ENCODE measurements at regions of chr1 and their contacts with region 1.

Region 1: DNA sequence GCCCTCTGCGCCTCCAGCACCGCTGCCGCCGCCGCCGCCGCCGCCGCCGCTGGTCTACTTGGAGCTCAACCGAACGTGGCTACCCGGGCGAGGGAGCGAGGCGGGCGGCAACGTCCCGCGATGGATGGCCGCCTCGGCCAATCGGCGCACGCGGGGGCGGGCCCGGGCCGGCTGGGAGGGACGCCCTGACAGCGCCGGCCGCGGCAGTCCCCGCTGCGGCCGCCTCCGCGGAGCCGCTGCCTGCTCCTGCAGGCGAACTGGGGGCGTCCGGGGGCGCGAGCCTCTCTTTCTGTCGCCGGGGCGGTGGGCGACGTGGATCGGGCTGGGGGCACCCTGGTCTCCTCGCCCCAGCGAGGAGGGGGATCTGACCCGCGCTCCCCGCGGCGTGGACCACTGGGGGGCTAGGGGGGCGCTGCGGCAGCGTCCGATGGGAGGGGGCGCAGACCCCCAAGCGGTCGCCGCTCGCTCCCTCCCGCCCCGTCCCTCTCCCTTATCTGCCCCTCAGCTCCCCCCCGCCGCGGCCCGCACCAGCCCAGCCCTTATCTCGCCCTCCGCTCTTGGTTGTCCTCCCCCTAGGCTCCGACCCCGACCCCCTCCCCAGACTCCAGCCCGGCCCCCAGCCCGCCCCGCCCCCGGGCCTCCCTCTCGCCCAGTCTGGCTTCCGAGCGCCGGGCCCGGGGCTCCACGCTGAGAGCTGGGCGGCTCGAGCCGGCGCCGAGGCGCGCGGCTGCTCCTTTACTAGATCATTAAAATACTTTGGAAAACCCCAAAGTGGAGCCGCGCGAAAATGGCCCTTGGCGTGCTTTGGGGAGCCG is at the start of gene SSBP3:
- DNase-seq: peak; percentile 95
- ATAC-seq: peak; percentile 95
- total RNA-seq, gene SSBP3: 53.6 TPM

Region 2: DNA sequence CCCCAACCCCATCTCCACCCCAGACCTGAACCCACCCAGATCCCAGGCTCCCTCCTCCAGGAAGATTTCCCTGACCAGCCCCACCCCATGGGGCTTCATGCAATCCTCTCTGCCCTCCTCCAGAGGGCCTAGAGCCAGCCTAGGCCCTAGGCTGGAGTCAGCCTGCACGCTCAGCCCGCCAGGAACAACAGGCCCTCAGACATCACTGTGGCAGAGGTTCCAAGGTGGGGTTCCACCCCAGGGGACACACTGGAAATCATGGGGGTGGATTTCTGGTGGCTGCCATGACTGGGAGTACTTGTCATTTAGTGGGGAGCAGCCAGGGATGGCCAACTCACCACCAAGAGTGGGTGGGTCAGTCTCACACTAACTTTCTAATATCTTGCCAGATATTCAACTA is 789.6 kb before region 1 on chr1:
- intact Hi-C with region 1: no loop called
- DNase-seq: no peak
- ATAC-seq: peak; percentile 34

Region 3: DNA sequence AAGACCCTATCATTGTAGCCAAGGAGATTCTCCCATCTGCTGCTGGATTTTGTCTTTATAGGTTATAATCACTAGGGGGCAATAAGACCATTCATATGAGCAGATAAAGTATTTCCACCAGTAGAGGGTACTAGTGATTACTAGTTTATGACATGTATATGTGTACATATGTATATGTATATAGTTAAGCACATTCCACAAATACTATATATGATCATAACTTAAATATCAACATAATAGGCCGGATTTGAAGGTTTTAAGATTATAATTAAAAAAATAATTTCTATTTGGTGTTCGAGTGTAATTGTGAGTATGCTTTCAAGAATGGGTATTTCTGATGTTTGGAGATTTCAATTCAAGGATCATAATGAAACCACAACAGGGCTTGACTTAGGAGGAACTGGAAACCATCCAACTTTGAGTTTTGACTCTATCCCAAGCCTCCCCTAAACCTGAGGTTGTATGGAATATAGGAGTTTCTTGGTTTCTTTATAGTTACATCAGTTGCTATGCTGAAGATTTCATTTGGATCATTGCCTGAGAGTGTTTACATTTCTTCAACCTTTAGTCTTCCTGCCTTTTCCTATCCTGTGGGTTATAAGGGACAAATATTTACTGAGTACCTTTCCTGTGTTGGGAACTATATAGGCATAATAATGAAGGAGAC is 336.2 kb before region 1 on chr1:
- intact Hi-C with region 1: loop called (anchors 10 kb)
- DNase-seq: no peak
- ATAC-seq: peak; percentile 54

Region 4: GRCh38 chr1:54121482-54122134 is 284.9 kb before region 1 on chr1:
- intact Hi-C with region 1: loop called (anchors 5 kb)
- DNase-seq: peak; percentile 86
- ATAC-seq: peak; percentile 89

Region 5: DNA sequence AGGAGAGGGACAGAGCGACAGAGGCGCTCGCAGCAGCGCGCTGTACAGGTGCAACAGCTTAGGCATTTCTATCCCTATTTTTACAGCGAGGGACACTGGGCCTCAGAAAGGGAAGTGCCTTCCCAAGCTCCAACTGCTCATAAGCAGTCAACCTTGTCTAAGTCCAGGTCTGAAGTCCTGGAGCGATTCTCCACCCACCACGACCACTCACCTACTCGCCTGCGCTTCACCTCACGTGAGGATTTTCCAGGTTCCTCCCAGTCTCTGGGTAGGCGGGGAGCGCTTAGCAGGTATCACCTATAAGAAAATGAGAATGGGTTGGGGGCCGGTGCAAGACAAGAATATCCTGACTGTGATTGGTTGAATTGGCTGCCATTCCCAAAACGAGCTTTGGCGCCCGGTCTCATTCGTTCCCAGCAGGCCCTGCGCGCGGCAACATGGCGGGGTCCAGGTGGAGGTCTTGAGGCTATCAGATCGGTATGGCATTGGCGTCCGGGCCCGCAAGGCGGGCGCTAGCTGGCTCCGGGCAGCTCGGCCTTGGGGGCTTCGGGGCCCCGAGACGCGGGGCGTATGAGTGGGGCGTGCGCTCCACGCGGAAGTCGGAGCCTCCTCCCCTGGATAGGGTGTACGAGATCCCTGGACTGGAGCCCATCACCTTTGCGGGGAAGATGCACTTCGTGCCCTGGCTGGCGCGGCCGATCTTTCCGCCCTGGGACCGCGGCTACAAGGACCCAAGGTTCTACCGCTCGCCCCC is 206.6 kb before region 1 on chr1 and contains the starts of genes CYB5RL and MRPL37:
- intact Hi-C with region 1: loop called (anchors 2 kb)
- DNase-seq: peak; percentile 95
- ATAC-seq: peak; percentile 99
- total RNA-seq, gene CYB5RL: 3.9 TPM
- total RNA-seq, gene MRPL37: 85.2 TPM

Region 6: GRCh38 chr1:54310439-54311328 is 95.9 kb before region 1 on chr1:
- intact Hi-C with region 1: loop called (anchors 2 kb)
- DNase-seq: no peak
- ATAC-seq: no peak

Region 7: GRCh38 chr1:54537611-54538010 is 131.1 kb after region 1 on chr1:
- intact Hi-C with region 1: no loop called
- DNase-seq: no peak
- ATAC-seq: no peak

Region 8: DNA sequence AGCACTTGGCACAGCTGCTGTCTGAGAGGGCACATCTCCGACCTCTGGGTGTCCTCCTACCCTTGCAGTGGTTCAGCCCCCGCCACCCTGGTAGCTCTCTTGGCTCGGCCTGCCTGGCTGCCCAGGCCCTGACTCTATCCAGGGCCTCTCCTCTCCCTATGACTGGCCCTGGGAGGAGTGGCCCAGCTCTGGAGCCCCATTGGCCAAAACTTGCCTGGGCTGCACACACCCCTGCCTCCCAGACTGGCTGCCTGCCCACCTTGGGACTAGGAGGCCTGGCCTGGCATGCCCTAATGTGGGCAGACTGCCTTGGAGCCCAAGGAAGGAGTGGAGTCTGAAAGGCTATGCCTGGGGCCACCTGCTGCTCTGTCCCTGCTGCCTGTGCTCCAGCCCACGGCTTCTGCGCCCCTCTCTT is 175.1 kb after region 1 on chr1:
- intact Hi-C with region 1: loop called (anchors 10 kb)
- DNase-seq: peak; percentile 90
- ATAC-seq: peak; percentile 90

Measured in Right ventricle myocardium inferior (tissue), 1 donor.